Endothelial cell of umbilical vein (primary cell): ENCODE measurements at regions of chr6 and their contacts with region 1.

Region 1: DNA sequence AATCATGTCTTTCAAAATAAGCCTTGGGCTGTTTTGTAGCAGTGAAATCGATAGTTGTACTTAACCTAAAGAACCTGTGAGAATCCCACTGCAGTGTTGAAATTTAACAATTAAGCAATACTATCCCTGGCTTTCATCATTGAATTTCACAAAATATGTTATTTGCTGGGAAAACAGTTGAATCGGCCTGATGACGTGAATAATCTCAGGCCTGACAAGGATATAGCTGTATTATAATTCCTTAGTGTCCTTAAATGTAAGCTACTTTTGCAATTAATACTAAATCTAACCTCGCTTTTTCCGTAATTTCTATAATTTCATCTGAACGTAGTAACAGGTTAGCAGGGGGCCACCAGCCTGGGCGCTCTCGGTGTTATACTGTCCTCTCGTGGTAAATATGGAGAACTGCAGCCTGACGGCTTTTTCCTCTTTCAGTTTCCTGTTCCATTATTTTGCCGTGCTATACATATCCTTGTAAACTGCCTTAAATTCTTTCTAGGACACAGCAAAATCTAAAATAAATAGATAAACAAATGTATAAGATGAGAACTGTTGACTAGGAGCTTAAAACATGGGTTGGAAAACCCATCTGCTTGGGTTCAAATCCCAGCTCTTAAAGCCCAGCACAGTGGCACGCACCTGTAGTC is 24.0 kb downstream of the MTFR2 start:
- DNase-seq: peak; percentile 67
- H3K4me3 ChIP-seq: peak overlapping the region in 1 of 3 experiments; percentile 25
- H3K27ac ChIP-seq: no peak overlapping the region
- H3K4me1 ChIP-seq: no peaks in the 10 kb centered on the region
- H3K27me3 ChIP-seq: no peaks in the 10 kb centered on the region
- CTCF ChIP-seq: peak; percentile 97 to 99
- POLR2A ChIP-seq: no peak

Region 2: DNA sequence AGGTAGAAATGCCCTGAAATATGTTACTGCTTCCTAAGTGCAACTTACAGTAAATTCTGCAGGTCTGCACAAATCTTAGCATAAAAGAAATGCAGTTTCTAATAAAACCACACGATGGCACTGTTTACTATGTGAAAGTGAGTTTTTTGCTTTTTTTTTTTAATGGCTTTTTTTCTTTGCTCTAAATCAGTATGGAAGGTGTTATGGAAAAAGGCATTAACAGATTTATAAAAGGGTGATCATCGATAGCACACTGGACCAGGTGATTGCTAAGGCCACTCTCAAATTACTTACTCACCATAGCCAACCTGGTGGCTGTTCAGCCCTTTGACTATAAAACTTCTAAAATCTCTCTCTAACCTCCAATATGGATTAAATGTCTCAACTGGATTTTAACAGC is 774.5 kb before region 1 on chr6:
- CTCF ChIA-PET with region 1: interaction called, 8 read pairs
- POLR2A ChIA-PET with region 1: no interaction called
- dilution Hi-C with region 1: no loop called
- intact Hi-C with region 1: loop called (anchors 1 kb)
- DNase-seq: peak; percentile 63
- H3K4me3 ChIP-seq: no peak overlapping the region
- H3K27ac ChIP-seq: no peak overlapping the region
- H3K4me1 ChIP-seq: no peaks in the 10 kb centered on the region
- H3K27me3 ChIP-seq: no peaks in the 10 kb centered on the region
- CTCF ChIP-seq: peak; percentile 35 to 42
- POLR2A ChIP-seq: no peak

Region 3: GRCh38 chr6:135506270-135506997 is 719.7 kb before region 1 on chr6:
- CTCF ChIA-PET with region 1: interaction called, 28 read pairs
- POLR2A ChIA-PET with region 1: no interaction called
- dilution Hi-C with region 1: no loop called
- intact Hi-C with region 1: loop called (anchors 1 kb)
- DNase-seq: peak; percentile 61
- H3K4me3 ChIP-seq: no peak overlapping the region
- H3K27ac ChIP-seq: no peak overlapping the region
- H3K4me1 ChIP-seq: no peaks in the 10 kb centered on the region
- H3K27me3 ChIP-seq: no peaks in the 10 kb centered on the region
- CTCF ChIP-seq: peak; percentile 32 to 39
- POLR2A ChIP-seq: no peak

Region 4: GRCh38 chr6:135851442-135852271 is 374.5 kb before region 1 on chr6 and contains the start of gene PDE7B:
- CTCF ChIA-PET with region 1: interaction called, 5 read pairs
- POLR2A ChIA-PET with region 1: no interaction called
- dilution Hi-C with region 1: no loop called
- intact Hi-C with region 1: loop called (anchors 1 kb)
- DNase-seq: peak; percentile 89
- H3K4me3 ChIP-seq: peak within 1 kb of the TSS; percentile 10 to 58 (median 14)
- H3K27ac ChIP-seq: peak within 1 kb of the TSS; percentile 2
- H3K4me1 ChIP-seq: peaks cover 17% of the 10 kb centered on the region
- H3K27me3 ChIP-seq: peaks cover 0 to 8% of the 10 kb centered on the region in 2 experiments
- CTCF ChIP-seq: no peak
- POLR2A ChIP-seq: no peak
- total RNA-seq, gene PDE7B: 21.3 and 25.1 TPM in 2 replicates

Region 5: GRCh38 chr6:136031982-136032381 is 194.2 kb before region 1 on chr6:
- CTCF ChIA-PET with region 1: interaction called, 30 read pairs
- POLR2A ChIA-PET with region 1: interaction called, 7 read pairs
- dilution Hi-C with region 1: no loop called
- intact Hi-C with region 1: loop called (anchors 1 kb)
- DNase-seq: peak; percentile 66
- H3K4me3 ChIP-seq: no peak overlapping the region
- H3K27ac ChIP-seq: no peak overlapping the region
- H3K4me1 ChIP-seq: peaks cover 36% of the 10 kb centered on the region
- H3K27me3 ChIP-seq: no peaks in the 10 kb centered on the region
- CTCF ChIP-seq: peak; percentile 55 to 61
- POLR2A ChIP-seq: no peak

Region 6: GRCh38 chr6:136317021-136317694 is 91.0 kb after region 1 on chr6:
- CTCF ChIA-PET with region 1: interaction called, 5 read pairs
- POLR2A ChIA-PET with region 1: no interaction called
- dilution Hi-C with region 1: no loop called
- intact Hi-C with region 1: loop called (anchors 2 kb)
- DNase-seq: peak; percentile 59
- H3K4me3 ChIP-seq: no peak overlapping the region
- H3K27ac ChIP-seq: no peak overlapping the region
- H3K4me1 ChIP-seq: no peaks in the 10 kb centered on the region
- H3K27me3 ChIP-seq: peaks cover 5 to 7% of the 10 kb centered on the region in 2 experiments
- CTCF ChIP-seq: peak; percentile 69 to 74
- POLR2A ChIP-seq: no peak